CD8-positive, alpha-beta T cell (primary cell): ENCODE measurements at regions of chr6 and their contacts with region 1.

Region 1: DNA sequence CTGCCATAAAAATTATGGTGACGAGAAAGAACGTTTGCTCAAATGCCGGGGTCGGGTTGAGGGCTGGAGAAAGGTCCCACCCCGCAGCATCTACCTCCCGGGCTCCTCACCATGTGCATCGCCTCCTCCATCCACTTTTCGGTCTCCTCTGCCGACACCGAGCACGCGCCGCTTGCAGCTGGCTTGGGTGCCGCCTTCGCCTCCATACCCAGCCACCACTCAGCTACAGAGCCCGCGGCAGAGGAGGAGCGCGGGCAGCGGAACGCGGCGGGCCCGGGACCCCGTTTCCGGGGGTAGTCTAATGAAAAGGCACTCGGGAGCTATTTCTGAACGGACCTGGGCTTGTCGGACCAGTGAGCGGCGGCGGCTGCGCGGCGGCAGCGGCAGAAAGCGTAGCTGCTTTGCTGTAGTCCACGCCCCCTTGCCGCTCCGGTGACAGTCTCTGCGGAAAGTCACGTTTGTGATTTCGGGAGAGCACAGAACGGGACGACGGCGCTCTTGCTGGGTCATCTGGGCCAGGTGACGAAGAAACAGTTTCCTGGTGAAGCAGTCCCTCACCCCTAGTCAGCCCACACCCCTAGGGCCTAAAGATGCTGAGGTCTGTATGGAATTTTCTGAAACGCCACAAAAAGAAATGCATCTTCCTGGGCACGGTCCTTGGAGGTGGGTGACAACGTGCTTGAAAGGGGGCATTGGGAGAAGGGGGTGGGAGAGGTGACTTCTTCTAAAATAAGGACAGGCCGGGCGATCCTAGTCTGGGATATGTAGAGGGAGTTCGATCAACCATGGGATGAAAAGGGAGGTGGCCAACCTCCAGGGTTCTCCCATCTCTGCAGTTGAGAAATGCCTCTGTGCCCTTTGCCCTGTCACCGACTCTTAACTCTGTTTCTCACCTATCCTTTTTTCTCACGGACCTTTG is at the starts of genes ADAT2 and PEX3:
- DNase-seq: peak; percentile 82 to 95 (median 92)
- ATAC-seq: peak; percentile 90
- H3K4me3 ChIP-seq: peak within 1 kb of the TSS; percentile 64 to 86
- H3K4me3 Mint-ChIP-seq: peak within 1 kb of the TSS; percentile 100
- H3K27ac ChIP-seq: peak within 1 kb of the TSS; percentile 68 to 74
- H3K27ac Mint-ChIP-seq: peak within 1 kb of the TSS; percentile 96
- H3K4me1 ChIP-seq: peaks cover 21% of the 10 kb centered on the region
- H3K4me1 Mint-ChIP-seq: peaks cover 57% of the 10 kb centered on the region
- H3K27me3 ChIP-seq: no peaks in the 10 kb centered on the region
- H3K27me3 Mint-ChIP-seq: no peaks in the 10 kb centered on the region
- CTCF ChIP-seq: no peak
- total RNA-seq, gene ADAT2: 18.8 to 19.9 TPM
- total RNA-seq, gene PEX3: 10.5 to 11.6 TPM

Region 2: GRCh38 chr6:143060354-143060805 is 390.3 kb before region 1 on chr6:
- CTCF ChIA-PET with region 1: no interaction called
- POLR2A ChIA-PET with region 1: no interaction called
- intact Hi-C with region 1: loop called (anchors 2 to 5 kb)
- DNase-seq: peak; percentile 49 to 89 (median 75)
- ATAC-seq: peak; percentile 66
- H3K4me3 ChIP-seq: peak overlapping the region; percentile 90 to 92
- H3K4me3 Mint-ChIP-seq: peak overlapping the region; percentile 92
- H3K27ac ChIP-seq: peak overlapping the region; percentile 67 to 81
- H3K27ac Mint-ChIP-seq: peak overlapping the region; percentile 93
- H3K4me1 ChIP-seq: peaks cover 17% of the 10 kb centered on the region
- H3K4me1 Mint-ChIP-seq: peaks cover 21% of the 10 kb centered on the region
- H3K27me3 ChIP-seq: no peaks in the 10 kb centered on the region
- H3K27me3 Mint-ChIP-seq: no peaks in the 10 kb centered on the region
- CTCF ChIP-seq: no peak

Region 3: GRCh38 chr6:143510991-143511891 is 60.5 kb after region 1 on chr6 and contains the start of gene FUCA2:
- CTCF ChIA-PET with region 1: no interaction called
- POLR2A ChIA-PET with region 1: interaction called, 6 read pairs
- intact Hi-C with region 1: loop called in 1 of 2 experiments (anchors 1 kb)
- DNase-seq: peak; percentile 28 to 83 (median 64)
- ATAC-seq: peak; percentile 70
- H3K4me3 ChIP-seq: peak within 1 kb of the TSS; percentile 61 to 71
- H3K4me3 Mint-ChIP-seq: peak within 1 kb of the TSS; percentile 90
- H3K27ac ChIP-seq: peak within 1 kb of the TSS; percentile 26 to 70
- H3K27ac Mint-ChIP-seq: peak within 1 kb of the TSS; percentile 82
- H3K4me1 ChIP-seq: peaks cover 10% of the 10 kb centered on the region
- H3K4me1 Mint-ChIP-seq: peaks cover 25% of the 10 kb centered on the region
- H3K27me3 ChIP-seq: no peaks in the 10 kb centered on the region
- H3K27me3 Mint-ChIP-seq: no peaks in the 10 kb centered on the region
- CTCF ChIP-seq: no peak
- total RNA-seq, gene FUCA2: 1.6 to 2.2 TPM

Region 4: GRCh38 chr6:143536865-143537691 is 86.4 kb after region 1 on chr6:
- CTCF ChIA-PET with region 1: interaction called, 3 read pairs
- POLR2A ChIA-PET with region 1: interaction called, 5 read pairs
- intact Hi-C with region 1: loop called (anchors 2 kb)
- DNase-seq: peak; percentile 25 to 79 (median 57)
- ATAC-seq: peak; percentile 75
- H3K4me3 ChIP-seq: peak overlapping the region; percentile 54 to 73
- H3K4me3 Mint-ChIP-seq: peak overlapping the region; percentile 84
- H3K27ac ChIP-seq: peak overlapping the region in 1 of 2 experiments; percentile 62
- H3K27ac Mint-ChIP-seq: peak overlapping the region; percentile 90
- H3K4me1 ChIP-seq: peaks cover 5% of the 10 kb centered on the region
- H3K4me1 Mint-ChIP-seq: peaks cover 36% of the 10 kb centered on the region
- H3K27me3 ChIP-seq: no peaks in the 10 kb centered on the region
- H3K27me3 Mint-ChIP-seq: no peaks in the 10 kb centered on the region
- CTCF ChIP-seq: peak; percentile 53

Region 5: GRCh38 chr6:144063744-144064401 is 613.2 kb after region 1 on chr6:
- CTCF ChIA-PET with region 1: no interaction called
- POLR2A ChIA-PET with region 1: no interaction called
- intact Hi-C with region 1: loop called in 1 of 2 experiments (anchors 1 kb)
- DNase-seq: peak; percentile 85 to 96 (median 91)
- ATAC-seq: peak; percentile 90
- H3K4me3 ChIP-seq: peak overlapping the region; percentile 93 to 97
- H3K4me3 Mint-ChIP-seq: peak overlapping the region; percentile 91
- H3K27ac ChIP-seq: peak overlapping the region; percentile 86 to 88
- H3K27ac Mint-ChIP-seq: peak overlapping the region; percentile 95
- H3K4me1 ChIP-seq: peaks cover 16% of the 10 kb centered on the region
- H3K4me1 Mint-ChIP-seq: peaks cover 30% of the 10 kb centered on the region
- H3K27me3 ChIP-seq: no peaks in the 10 kb centered on the region
- H3K27me3 Mint-ChIP-seq: no peaks in the 10 kb centered on the region
- CTCF ChIP-seq: no peak

Region 6: GRCh38 chr6:144149891-144150709 is 699.4 kb after region 1 on chr6 and contains the start of gene STX11:
- CTCF ChIA-PET with region 1: no interaction called
- POLR2A ChIA-PET with region 1: no interaction called
- intact Hi-C with region 1: loop called in 1 of 2 experiments (anchors 5 kb)
- DNase-seq: peak; percentile 27 to 89 (median 67)
- ATAC-seq: peak; percentile 56
- H3K4me3 ChIP-seq: peak within 1 kb of the TSS; percentile 68 to 71
- H3K4me3 Mint-ChIP-seq: peak within 1 kb of the TSS; percentile 94
- H3K27ac ChIP-seq: peak within 1 kb of the TSS; percentile 66 to 90
- H3K27ac Mint-ChIP-seq: peak within 1 kb of the TSS; percentile 95
- H3K4me1 ChIP-seq: peaks cover 5% of the 10 kb centered on the region
- H3K4me1 Mint-ChIP-seq: peaks cover 19% of the 10 kb centered on the region
- H3K27me3 ChIP-seq: no peaks in the 10 kb centered on the region
- H3K27me3 Mint-ChIP-seq: no peaks in the 10 kb centered on the region
- CTCF ChIP-seq: no peak
- total RNA-seq, gene STX11: 17.7 to 18.9 TPM

Region 7: GRCh38 chr6:144334131-144334708 is 883.5 kb after region 1 on chr6:
- CTCF ChIA-PET with region 1: no interaction called
- POLR2A ChIA-PET with region 1: no interaction called
- intact Hi-C with region 1: loop called in 1 of 2 experiments (anchors 10 kb)
- DNase-seq: peak; percentile 42 to 94 (median 78)
- ATAC-seq: peak; percentile 93
- H3K4me3 ChIP-seq: peak overlapping the region; percentile 51 to 52
- H3K4me3 Mint-ChIP-seq: peak overlapping the region; percentile 86
- H3K27ac ChIP-seq: peak overlapping the region; percentile 65 to 90
- H3K27ac Mint-ChIP-seq: peak overlapping the region; percentile 98
- H3K4me1 ChIP-seq: peaks cover 47% of the 10 kb centered on the region
- H3K4me1 Mint-ChIP-seq: peaks cover 53% of the 10 kb centered on the region
- H3K27me3 ChIP-seq: no peaks in the 10 kb centered on the region
- H3K27me3 Mint-ChIP-seq: no peaks in the 10 kb centered on the region
- CTCF ChIP-seq: no peak